SK-N-SH (cell line): ENCODE measurements at regions of chr16 and their contacts with region 1.

Region 1: GRCh38 chr16:47141773-47142485 is 1.8 kb downstream of the NETO2 start:
- DNase-seq: peak; percentile 76
- H3K4me3 ChIP-seq: peak overlapping the region; percentile 83 to 84
- H3K27ac ChIP-seq: peak overlapping the region; percentile 54 to 85; a peak in 3 of 4 replicates
- H3K4me1 ChIP-seq: peaks cover 7 to 15% of the 10 kb centered on the region in 2 experiments; a peak in 2 of 4 replicates
- H3K27me3 ChIP-seq: no peaks in the 10 kb centered on the region
- CTCF ChIP-seq: peak; percentile 93
- EP300 ChIP-seq: no peak
- RAD21 ChIP-seq: peak; percentile 96

Region 2: DNA sequence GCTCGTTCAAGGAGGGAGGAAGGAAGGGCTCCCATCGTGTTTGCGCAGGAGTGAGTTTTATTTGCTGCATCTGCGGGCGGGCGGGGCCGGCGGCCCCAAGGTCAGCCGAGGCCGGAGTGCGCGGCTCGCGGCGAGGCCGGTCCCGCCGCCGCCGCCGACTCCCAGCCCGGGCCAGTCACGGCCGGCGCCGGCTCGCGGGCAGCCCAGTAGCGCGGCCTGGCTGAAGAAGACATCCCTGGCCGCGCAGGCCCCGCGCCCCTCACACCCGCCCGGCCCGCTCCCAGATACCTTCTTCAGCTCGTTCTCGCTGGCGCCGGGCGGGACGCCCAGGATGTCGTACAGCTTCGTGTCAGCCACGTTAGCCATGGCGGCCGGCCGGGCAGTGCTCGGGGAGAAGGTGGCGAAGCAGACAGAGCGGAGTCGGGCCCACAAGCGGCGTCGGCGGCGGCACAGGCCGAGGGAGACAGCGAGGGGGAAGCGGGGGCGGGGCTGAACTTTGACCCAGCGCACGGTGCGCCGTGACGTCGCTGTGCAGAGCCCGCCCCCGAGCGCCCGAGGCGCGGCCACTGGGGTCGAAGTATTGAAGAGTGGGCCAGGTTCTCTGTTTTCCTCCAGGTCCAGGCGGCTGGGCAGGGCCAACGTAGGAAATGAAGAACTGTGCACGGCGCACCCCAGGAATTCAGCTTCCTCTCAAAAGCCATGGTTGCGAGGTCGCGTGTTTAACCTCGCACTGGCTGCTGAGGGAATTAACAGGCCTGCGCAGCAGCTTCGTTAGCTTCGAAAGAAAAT is 168.5 kb before region 1 on chr16 and contains the start of gene DNAJA2:
- CTCF ChIA-PET with region 1: interaction called, 13 read pairs
- POLR2A ChIA-PET with region 1: interaction called, 4 read pairs
- DNase-seq: peak; percentile 96
- H3K4me3 ChIP-seq: peak within 1 kb of the TSS; percentile 91 to 95
- H3K27ac ChIP-seq: peak within 1 kb of the TSS; percentile 86 to 98
- H3K4me1 ChIP-seq: peaks cover 10 to 13% of the 10 kb centered on the region in 2 experiments; a peak in 3 of 4 replicates
- H3K27me3 ChIP-seq: no peaks in the 10 kb centered on the region
- CTCF ChIP-seq: no peak
- EP300 ChIP-seq: peak in 1 of 2 experiments; percentile 10; a peak in 1 of 4 replicates
- RAD21 ChIP-seq: no peak
- polyA plus RNA-seq, gene DNAJA2: 9.7 and 12.8 TPM in 2 replicates

Region 3: GRCh38 chr16:47037746-47038458 is 104.0 kb before region 1 on chr16:
- CTCF ChIA-PET with region 1: interaction called, 53 read pairs
- POLR2A ChIA-PET with region 1: no interaction called
- DNase-seq: peak; percentile 98
- H3K4me3 ChIP-seq: peak overlapping the region; percentile 63 to 73
- H3K27ac ChIP-seq: no peak overlapping the region
- H3K4me1 ChIP-seq: no peaks in the 10 kb centered on the region
- H3K27me3 ChIP-seq: no peaks in the 10 kb centered on the region
- CTCF ChIP-seq: peak; percentile 83
- EP300 ChIP-seq: no peak
- RAD21 ChIP-seq: peak; percentile 72

Region 4: GRCh38 chr16:47125757-47126156 is 16.2 kb before region 1 on chr16:
- CTCF ChIA-PET with region 1: interaction called, 36 read pairs
- POLR2A ChIA-PET with region 1: interaction called, 3 read pairs
- DNase-seq: no peak
- H3K4me3 ChIP-seq: no peak overlapping the region
- H3K27ac ChIP-seq: no peak overlapping the region
- H3K4me1 ChIP-seq: no peaks in the 10 kb centered on the region; a peak in 2 of 4 replicates
- H3K27me3 ChIP-seq: no peaks in the 10 kb centered on the region
- CTCF ChIP-seq: no peak
- EP300 ChIP-seq: no peak
- RAD21 ChIP-seq: no peak

Region 5: GRCh38 chr16:47162670-47163420 is 20.9 kb after region 1 on chr16:
- CTCF ChIA-PET with region 1: interaction called, 16 read pairs
- POLR2A ChIA-PET with region 1: no interaction called
- DNase-seq: no peak
- H3K4me3 ChIP-seq: no peak overlapping the region
- H3K27ac ChIP-seq: no peak overlapping the region
- H3K4me1 ChIP-seq: no peaks in the 10 kb centered on the region
- H3K27me3 ChIP-seq: no peaks in the 10 kb centered on the region
- CTCF ChIP-seq: 0 out of 2 replicates have a peak, but pooled peaks have one; percentile 11
- EP300 ChIP-seq: no peak
- RAD21 ChIP-seq: peak; percentile 35; the same call in 1 of the 2 replicates

Region 6: DNA sequence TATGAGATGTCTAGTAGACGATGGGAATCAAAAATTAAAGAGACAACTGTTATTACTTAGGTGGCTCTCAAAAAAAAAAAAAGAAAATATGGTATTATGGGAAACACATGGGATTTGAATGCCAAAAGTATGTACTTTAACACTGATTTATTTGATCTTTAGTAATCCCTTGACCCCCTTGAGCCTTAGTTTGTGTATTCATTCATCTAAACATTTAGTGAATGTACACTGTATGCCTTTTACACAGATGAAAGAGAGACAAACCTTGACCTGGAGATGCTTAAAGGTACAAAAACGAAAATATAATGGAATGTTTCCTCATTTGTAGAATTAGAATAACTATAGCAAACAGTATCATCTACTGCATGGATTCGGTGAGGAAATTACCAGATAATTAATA is 40.4 kb after region 1 on chr16:
- CTCF ChIA-PET with region 1: no interaction called
- POLR2A ChIA-PET with region 1: no interaction called
- DNase-seq: no peak
- H3K4me3 ChIP-seq: no peak overlapping the region
- H3K27ac ChIP-seq: no peak overlapping the region
- H3K4me1 ChIP-seq: no peaks in the 10 kb centered on the region
- H3K27me3 ChIP-seq: no peaks in the 10 kb centered on the region
- CTCF ChIP-seq: no peak
- EP300 ChIP-seq: no peak
- RAD21 ChIP-seq: no peak

Region 7: GRCh38 chr16:47562366-47562765 is 420.4 kb after region 1 on chr16:
- CTCF ChIA-PET with region 1: no interaction called
- POLR2A ChIA-PET with region 1: no interaction called
- DNase-seq: no peak
- H3K4me3 ChIP-seq: no peak overlapping the region
- H3K27ac ChIP-seq: no peak overlapping the region
- H3K4me1 ChIP-seq: no peaks in the 10 kb centered on the region
- H3K27me3 ChIP-seq: no peaks in the 10 kb centered on the region
- CTCF ChIP-seq: no peak
- EP300 ChIP-seq: no peak
- RAD21 ChIP-seq: no peak

Region 8: DNA sequence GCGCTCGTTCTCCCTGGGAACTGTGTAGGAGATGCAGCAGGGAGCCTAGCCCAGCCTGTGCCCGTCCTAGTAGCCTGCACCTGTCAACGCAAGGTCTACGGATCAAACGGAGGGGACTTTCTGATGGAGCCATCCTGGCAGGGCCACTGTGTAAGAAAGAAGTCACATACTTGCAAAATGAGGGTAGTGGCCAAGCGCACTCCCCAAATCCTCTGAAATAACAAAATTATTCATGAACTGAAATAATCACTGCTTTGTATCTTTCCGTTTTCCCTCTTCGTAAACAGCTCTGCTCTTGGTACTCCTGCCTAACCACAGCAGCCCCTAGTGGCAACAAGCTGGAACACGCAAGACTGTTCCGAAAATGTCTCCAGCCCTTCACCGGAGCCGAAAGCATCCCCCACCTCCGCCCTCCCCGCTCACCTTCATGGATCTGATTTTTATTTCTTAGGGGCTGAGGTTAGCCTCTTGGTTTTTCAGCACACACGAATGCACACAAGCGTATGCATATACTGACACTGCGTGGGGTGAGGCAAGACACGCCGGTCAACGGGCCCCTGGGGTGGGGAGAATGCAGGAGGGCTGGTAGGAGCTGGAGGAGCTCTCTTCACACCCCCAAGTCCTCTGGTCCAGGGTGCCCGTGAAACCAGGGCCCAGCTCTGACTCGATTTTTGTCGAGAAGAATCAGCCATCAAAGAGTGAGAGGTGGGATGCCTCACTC is 913.1 kb after region 1 on chr16:
- CTCF ChIA-PET with region 1: interaction called, 80 read pairs
- POLR2A ChIA-PET with region 1: no interaction called
- DNase-seq: peak; percentile 73
- H3K4me3 ChIP-seq: peak overlapping the region in 1 of 2 experiments; percentile 27; a peak in 1 of 4 replicates
- H3K27ac ChIP-seq: no peak overlapping the region
- H3K4me1 ChIP-seq: peaks cover 0 to 3% of the 10 kb centered on the region in 2 experiments; a peak in 1 of 4 replicates
- H3K27me3 ChIP-seq: no peaks in the 10 kb centered on the region; the same call in 1 of the 2 replicates
- CTCF ChIP-seq: peak; percentile 78
- EP300 ChIP-seq: no peak
- RAD21 ChIP-seq: peak; percentile 90

Region 9: GRCh38 chr16:48164907-48165726 is 1023.2 kb after region 1 on chr16:
- CTCF ChIA-PET with region 1: interaction called, 152 read pairs
- POLR2A ChIA-PET with region 1: interaction called, 12 read pairs
- DNase-seq: peak; percentile 88
- H3K4me3 ChIP-seq: peak overlapping the region in 1 of 2 experiments; percentile 12; a peak in 1 of 4 replicates
- H3K27ac ChIP-seq: no peak overlapping the region
- H3K4me1 ChIP-seq: peaks cover 0 to 4% of the 10 kb centered on the region in 2 experiments; a peak in 1 of 4 replicates
- H3K27me3 ChIP-seq: no peaks in the 10 kb centered on the region
- CTCF ChIP-seq: peak; percentile 88
- EP300 ChIP-seq: no peak
- RAD21 ChIP-seq: peak; percentile 93